Activated T-helper 2 cell treated with anti-CD3 and anti-CD28 coated beads, Interferon-gamma antibody, Interleukin-2, Interleukin-4, amounts not matched to agents 10 μg/mL and 5 μg/mL and 100 μg/mL, durations not matched to agents 14 hours and 24 hours and 36 hours (primary cell): ENCODE measurements at regions of chr12 and their contacts with region 1.

Region 1: DNA sequence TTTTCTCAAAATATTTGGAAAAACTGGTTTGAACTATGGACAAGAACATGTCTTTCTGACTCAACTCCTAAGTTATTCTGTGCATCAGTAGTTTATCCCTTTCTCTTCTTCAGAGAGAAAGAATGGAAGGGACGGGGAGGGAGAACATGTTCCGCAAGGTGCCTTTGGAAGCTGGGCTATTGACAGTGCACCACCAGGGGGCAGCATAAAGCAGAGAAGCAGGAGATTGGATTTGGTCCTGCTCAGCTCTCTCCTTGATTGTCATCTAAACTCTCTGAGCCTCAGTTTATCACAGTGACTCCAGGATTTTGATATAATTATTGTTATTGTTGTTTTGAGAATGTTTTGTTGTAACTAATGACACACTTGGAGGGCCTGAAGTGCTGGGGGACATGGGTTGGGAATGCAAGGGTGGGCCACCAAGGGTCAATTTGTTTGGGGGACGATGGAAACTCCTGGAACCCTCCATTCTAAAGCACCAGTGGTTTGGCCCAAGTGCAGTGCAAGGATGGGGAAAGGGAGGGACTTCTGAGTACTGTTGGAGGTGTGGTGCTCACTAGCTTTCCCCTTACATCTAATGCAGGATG is 45.3 kb upstream of the ANO6 start:
- DNase-seq: peak; percentile 55
- H3K4me3 Mint-ChIP-seq: no peak overlapping the region
- H3K27ac Mint-ChIP-seq: no peak overlapping the region
- H3K4me1 Mint-ChIP-seq: no peaks in the 10 kb centered on the region
- H3K27me3 Mint-ChIP-seq: peaks cover 9% of the 10 kb centered on the region

Region 2: DNA sequence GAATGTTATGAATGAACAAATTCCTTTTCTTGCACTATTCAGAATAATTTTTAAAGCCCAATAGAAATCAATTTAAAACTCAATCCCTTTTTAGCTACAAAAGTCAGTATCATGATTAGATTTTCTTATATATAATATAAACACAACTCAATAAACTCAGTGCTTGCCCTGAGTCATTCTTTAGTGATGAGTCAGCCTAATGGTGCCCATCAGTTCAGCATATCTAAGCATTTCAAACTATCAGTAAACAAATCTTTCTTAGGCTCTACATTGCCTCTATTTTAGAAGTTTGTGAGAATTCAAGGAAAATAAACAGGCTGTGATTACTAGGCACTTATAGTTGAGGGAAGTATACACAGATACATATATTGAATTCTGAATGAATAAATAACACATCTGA is 474.0 kb before region 1 on chr12:
- intact Hi-C with region 1: no loop called
- DNase-seq: no peak
- H3K4me3 Mint-ChIP-seq: no peak overlapping the region
- H3K27ac Mint-ChIP-seq: no peak overlapping the region
- H3K4me1 Mint-ChIP-seq: no peaks in the 10 kb centered on the region
- H3K27me3 Mint-ChIP-seq: no peaks in the 10 kb centered on the region

Region 3: GRCh38 chr12:45215419-45216229 is 45.1 kb after region 1 on chr12 and contains the start of gene ANO6:
- intact Hi-C with region 1: loop called (anchors 2 kb)
- DNase-seq: peak; percentile 74
- H3K4me3 Mint-ChIP-seq: peak within 1 kb of the TSS; percentile 97
- H3K27ac Mint-ChIP-seq: peak within 1 kb of the TSS; percentile 95
- H3K4me1 Mint-ChIP-seq: peaks cover 34% of the 10 kb centered on the region
- H3K27me3 Mint-ChIP-seq: no peaks in the 10 kb centered on the region
- total RNA-seq, gene ANO6: 25.2 and 25.7 TPM in 2 replicates

Region 4: DNA sequence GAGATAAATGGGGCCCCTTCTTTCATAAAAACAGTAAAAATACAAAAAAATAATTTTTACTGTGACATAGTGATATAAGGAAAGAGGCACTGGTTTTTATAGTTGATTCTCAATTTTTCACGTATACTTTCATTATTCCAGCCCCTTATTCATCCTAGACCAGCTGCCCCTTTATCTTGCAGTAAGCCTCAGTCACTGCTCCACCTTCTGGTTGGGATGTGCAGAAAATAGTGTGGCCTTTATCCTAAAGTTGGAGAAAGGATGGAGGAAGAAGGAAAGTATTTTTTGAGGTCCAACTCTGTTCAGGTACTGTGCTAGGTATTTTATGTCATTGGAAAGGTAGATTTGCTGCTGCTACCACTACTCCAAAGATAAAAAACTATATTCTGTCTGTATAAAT is 218.0 kb after region 1 on chr12:
- intact Hi-C with region 1: loop called (anchors 2 kb)
- DNase-seq: no peak
- H3K4me3 Mint-ChIP-seq: no peak overlapping the region
- H3K27ac Mint-ChIP-seq: no peak overlapping the region
- H3K4me1 Mint-ChIP-seq: no peaks in the 10 kb centered on the region
- H3K27me3 Mint-ChIP-seq: no peaks in the 10 kb centered on the region

Region 5: DNA sequence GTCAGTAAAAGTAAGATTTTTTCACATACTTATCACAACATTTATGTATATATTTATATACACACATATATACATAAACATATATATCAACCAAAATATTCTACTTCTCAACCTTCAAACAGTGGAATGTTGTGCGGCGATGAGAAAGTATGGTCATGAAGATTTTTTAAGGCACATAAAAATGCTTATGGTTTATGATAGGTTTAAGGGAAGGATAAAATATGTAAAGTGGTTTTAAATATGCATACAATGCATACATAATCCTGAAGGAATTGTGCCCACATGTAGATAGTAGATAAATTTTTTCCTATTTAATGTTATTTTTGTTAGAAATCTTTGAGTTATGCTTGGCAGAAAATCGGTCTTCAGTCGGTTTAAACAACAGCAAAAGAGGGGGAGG is 228.0 kb after region 1 on chr12:
- intact Hi-C with region 1: no loop called
- DNase-seq: no peak
- H3K4me3 Mint-ChIP-seq: no peak overlapping the region
- H3K27ac Mint-ChIP-seq: no peak overlapping the region
- H3K4me1 Mint-ChIP-seq: no peaks in the 10 kb centered on the region
- H3K27me3 Mint-ChIP-seq: no peaks in the 10 kb centered on the region